Esophagus muscularis mucosa (tissue), 4 donors: ENCODE measurements at regions of chr7 and their contacts with region 1.

Region 1: GRCh38 chr7:129224251-129225205 is at the start of gene AHCYL2:
- DNase-seq: peak; percentile 99
- H3K4me3 ChIP-seq: peak within 1 kb of the TSS; percentile 85 to 98 (median 94)
- H3K27ac ChIP-seq: peak within 1 kb of the TSS; percentile 93 to 96 (median 94)
- H3K4me1 ChIP-seq: peaks cover 5 to 44% (median 27%) of the 10 kb centered on the region in 4 donors
- H3K27me3 ChIP-seq: no peaks in the 10 kb centered on the region
- CTCF ChIP-seq: no peak
- EP300 ChIP-seq: no peak
- POLR2A ChIP-seq: no peak
- total RNA-seq, gene AHCYL2: 9.7 to 14.2 (median 11.9) TPM

Region 2: GRCh38 chr7:129471402-129471827 is 246.9 kb after region 1 on chr7:
- intact Hi-C with region 1: loop called (anchors 5 kb)
- DNase-seq: no peak
- H3K4me3 ChIP-seq: no peak overlapping the region
- H3K27ac ChIP-seq: no peak overlapping the region
- H3K4me1 ChIP-seq: peaks cover 0 to 16% (median 10%) of the 10 kb centered on the region in 4 donors
- H3K27me3 ChIP-seq: no peaks in the 10 kb centered on the region
- CTCF ChIP-seq: no peak
- EP300 ChIP-seq: no peak
- POLR2A ChIP-seq: no peak